ENCODE measurements at regions of chr2 and their contacts with region 1.

Region 1: GRCh38 chr2:48530033-48530804 is at the start of gene STON1:
- DNase-seq: peak; percentile 25
- ATAC-seq: peak; percentile 66
- H3K4me3 ChIP-seq: peak within 1 kb of the TSS; percentile 88
- H3K27ac ChIP-seq: peak within 1 kb of the TSS; percentile 66
- H3K4me1 ChIP-seq: peaks cover 12% of the 10 kb centered on the region
- H3K27me3 ChIP-seq: peaks cover 2% of the 10 kb centered on the region; the same call in 1 of the 2 replicates
- CTCF ChIP-seq: 0 out of 2 replicates have a peak, but pooled peaks have one; percentile 8
- POLR2A ChIP-seq: no peak
- RAD21 ChIP-seq: no peak
- total RNA-seq, gene STON1: 5.7 and 6.9 TPM in 2 replicates

Region 2: DNA sequence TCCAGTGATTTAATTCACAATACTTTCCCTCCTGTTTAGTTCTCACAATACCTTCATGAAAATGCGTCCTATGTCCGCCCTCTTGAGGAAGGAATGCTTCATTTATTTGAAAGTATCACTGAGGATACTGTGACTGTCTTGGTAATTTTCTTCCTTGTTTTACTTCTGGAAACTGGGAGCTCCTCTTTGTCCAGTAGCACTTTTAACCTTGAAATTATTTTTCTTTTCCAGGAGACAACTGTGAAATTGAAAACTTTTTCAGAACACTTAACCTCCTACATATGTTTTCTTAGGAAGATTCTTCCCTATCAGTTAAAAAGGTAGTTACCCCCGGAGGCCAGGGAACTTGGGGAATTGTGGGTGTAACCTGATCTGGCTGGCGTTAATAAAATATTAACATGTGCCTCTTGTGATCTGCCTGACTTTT is 59.2 kb before region 1 on chr2:
- CTCF ChIA-PET with region 1: interaction called, 4 read pairs
- POLR2A ChIA-PET with region 1: no interaction called
- dilution Hi-C with region 1: no loop called
- in situ Hi-C with region 1: no loop called
- intact Hi-C with region 1: loop called (anchors 2 kb)
- DNase-seq: peak; percentile 78
- ATAC-seq: peak; percentile 89
- H3K4me3 ChIP-seq: no peak overlapping the region
- H3K27ac ChIP-seq: no peak overlapping the region
- H3K4me1 ChIP-seq: 0 out of 2 replicates have a peak, but pooled peaks cover 1% of the 10 kb centered on the region
- H3K27me3 ChIP-seq: no peaks in the 10 kb centered on the region
- CTCF ChIP-seq: peak; percentile 84
- POLR2A ChIP-seq: no peak
- RAD21 ChIP-seq: peak; percentile 73

Region 3: DNA sequence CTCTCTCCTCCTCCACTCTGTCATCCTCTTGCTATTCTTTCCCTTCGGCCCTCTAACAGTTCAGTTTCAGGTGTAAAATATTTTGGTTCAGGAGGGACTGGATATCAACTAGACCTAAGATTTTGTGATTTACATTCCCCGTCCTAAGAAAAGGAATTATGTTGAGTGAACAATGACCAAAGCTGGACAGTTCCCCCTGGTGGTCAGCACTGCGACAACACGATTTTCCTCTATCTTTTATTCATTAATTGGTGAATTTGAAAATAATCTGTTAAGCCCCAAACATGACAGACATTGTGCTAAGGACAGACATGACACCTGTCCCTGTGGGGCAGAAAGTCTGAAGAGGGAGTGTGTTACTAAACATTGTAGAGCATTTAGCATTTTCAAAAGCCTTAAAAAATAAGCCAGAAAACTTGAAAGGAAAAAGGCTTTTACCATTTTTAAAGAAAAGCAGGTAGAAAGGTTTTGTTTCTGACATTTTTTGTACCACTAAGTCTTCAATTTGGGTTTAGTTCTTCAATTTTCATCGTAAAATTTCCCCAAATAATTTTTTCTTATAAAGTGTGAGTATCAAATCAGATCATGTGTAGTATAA is 59.0 kb after region 1 on chr2:
- CTCF ChIA-PET with region 1: no interaction called
- POLR2A ChIA-PET with region 1: no interaction called
- dilution Hi-C with region 1: no loop called
- in situ Hi-C with region 1: no loop called
- intact Hi-C with region 1: loop called (anchors 5 kb)
- DNase-seq: peak; percentile 59
- ATAC-seq: peak; percentile 62
- H3K4me3 ChIP-seq: no peak overlapping the region
- H3K27ac ChIP-seq: no peak overlapping the region
- H3K4me1 ChIP-seq: peaks cover 2% of the 10 kb centered on the region
- H3K27me3 ChIP-seq: no peaks in the 10 kb centered on the region
- CTCF ChIP-seq: peak; percentile 85
- POLR2A ChIP-seq: no peak
- RAD21 ChIP-seq: peak; percentile 82

Measured in IMR-90 (cell line).